ENCODE measurements at regions of chr9 and their contacts with region 1.

Region 1: DNA sequence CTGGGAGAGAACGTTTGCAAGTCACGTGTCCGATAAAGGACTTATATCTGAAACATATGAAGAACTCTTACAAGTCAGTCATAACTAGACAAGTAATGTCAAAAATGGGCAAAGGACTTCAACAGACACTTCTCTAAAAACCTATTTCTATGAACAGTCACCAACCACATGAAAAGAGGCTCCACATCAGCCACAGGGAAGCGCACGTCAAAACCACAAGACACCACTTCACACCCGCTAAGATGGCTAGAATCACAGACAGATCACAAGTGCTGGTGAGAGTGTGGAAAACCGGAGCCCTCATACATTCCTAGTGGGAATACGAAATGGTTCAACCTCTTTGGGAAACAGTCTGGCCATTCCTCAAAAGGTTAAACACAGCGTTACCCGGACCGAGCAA is 11.5 kb upstream of the CARD9 start:
- H3K4me3 ChIP-seq: no peak overlapping the region
- H3K27ac ChIP-seq: no peak overlapping the region
- H3K4me1 ChIP-seq: no peaks in the 10 kb centered on the region
- CTCF ChIP-seq: no peak

Region 2: GRCh38 chr9:136196441-136197371 is 188.3 kb before region 1 on chr9:
- CTCF ChIA-PET with region 1: no interaction called
- POLR2A ChIA-PET with region 1: no interaction called
- H3K4me3 ChIP-seq: no peak overlapping the region
- H3K27ac ChIP-seq: no peak overlapping the region
- H3K4me1 ChIP-seq: no peaks in the 10 kb centered on the region; the same call in 1 of the 2 replicates
- CTCF ChIP-seq: no peak

Region 3: GRCh38 chr9:136372561-136373299 is 12.3 kb before region 1 on chr9:
- CTCF ChIA-PET with region 1: interaction called, 10 read pairs
- POLR2A ChIA-PET with region 1: interaction called, 4 read pairs
- H3K4me3 ChIP-seq: no peak overlapping the region
- H3K27ac ChIP-seq: no peak overlapping the region
- H3K4me1 ChIP-seq: no peaks in the 10 kb centered on the region
- CTCF ChIP-seq: no peak

Region 4: DNA sequence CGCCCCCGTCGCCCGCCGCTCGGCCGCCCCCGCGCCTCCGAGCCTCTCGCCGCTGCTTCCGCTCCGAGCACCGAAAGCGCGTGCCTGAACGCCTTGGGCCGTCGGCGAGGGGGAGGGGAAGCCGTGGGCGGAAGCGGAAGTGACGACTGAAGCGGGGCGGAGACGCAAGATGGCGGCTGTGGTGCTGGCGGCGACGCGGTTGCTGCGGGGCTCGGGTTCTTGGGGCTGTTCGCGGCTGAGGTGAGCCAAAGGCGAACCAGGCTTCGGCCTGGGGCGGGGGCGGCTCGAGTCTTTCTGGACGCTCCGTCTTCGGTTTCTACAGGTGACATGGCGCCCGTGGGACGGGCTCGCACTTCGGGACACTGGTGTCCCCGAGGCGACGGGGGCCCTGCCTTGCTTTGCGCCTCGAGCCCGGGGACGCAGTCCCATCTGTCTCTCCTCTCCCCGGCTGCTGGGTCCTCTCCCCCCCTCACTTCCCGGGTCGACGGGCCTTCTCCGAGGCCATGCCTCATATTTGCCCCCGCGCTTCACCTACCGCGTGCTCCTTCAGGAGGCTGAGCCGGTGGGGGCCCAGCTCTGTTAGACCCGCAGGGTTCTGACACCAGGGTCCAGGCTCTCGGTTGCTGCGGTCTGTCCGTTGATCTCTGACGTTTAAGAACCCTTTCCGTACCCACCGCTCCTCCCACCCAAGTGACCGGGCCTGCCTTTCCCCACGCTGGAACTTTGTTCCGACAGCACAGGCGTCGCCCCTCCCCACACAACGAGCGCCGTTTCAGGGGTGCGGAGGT is 25.7 kb after region 1 on chr9 and contains the starts of genes ENTR1 and PMPCA:
- CTCF ChIA-PET with region 1: no interaction called
- POLR2A ChIA-PET with region 1: no interaction called
- H3K4me3 ChIP-seq: peak within 1 kb of the TSS; percentile 75
- H3K27ac ChIP-seq: peak within 1 kb of the TSS; percentile 89; the same call in 1 of the 2 replicates
- H3K4me1 ChIP-seq: peaks cover 11% of the 10 kb centered on the region
- CTCF ChIP-seq: no peak

Region 5: GRCh38 chr9:136502942-136503550 is 118.0 kb after region 1 on chr9:
- CTCF ChIA-PET with region 1: no interaction called
- POLR2A ChIA-PET with region 1: no interaction called
- H3K4me3 ChIP-seq: no peak overlapping the region
- H3K27ac ChIP-seq: no peak overlapping the region
- H3K4me1 ChIP-seq: no peaks in the 10 kb centered on the region
- CTCF ChIP-seq: no peak; the same call in 1 of the 2 replicates

Region 6: DNA sequence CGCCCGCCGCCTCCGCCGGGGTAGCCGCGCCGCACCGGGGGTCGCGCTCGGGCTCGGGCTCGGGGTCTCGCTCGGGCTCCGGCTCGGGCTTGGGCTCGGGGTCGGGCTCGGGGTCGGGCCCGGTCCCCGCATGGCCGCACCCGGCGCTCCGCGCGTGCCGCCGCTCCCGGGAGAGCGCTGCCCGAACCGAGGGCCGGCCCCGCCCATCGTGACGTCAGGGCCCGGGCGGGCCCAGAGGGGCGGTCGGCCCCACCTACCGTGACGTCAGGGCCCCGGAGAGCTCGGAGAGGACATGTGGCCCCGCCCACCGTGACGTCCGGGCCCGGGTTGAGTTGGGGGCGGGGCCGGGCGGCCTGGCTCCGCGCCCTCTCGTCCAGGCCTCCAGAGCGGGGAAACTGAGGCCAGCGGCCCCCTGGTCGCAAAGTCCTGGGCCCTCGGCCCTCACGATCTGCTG is 1074.2 kb after region 1 on chr9 and contains the start of gene NSMF:
- CTCF ChIA-PET with region 1: no interaction called
- POLR2A ChIA-PET with region 1: no interaction called
- H3K4me3 ChIP-seq: peak within 1 kb of the TSS; percentile 61
- H3K27ac ChIP-seq: peak within 1 kb of the TSS; percentile 71; the same call in 1 of the 2 replicates
- H3K4me1 ChIP-seq: peaks cover 6% of the 10 kb centered on the region
- CTCF ChIP-seq: no peak

Measured in HEK293 (cell line).